IMR-90 (cell line): ENCODE measurements at regions of chr12 and their contacts with region 1.

Region 1: GRCh38 chr12:101127521-101128219 is 82.4 kb downstream of the SLC5A8 start:
- DNase-seq: peak; percentile 80
- ATAC-seq: peak; percentile 92
- H3K4me3 ChIP-seq: no peak overlapping the region
- H3K27ac ChIP-seq: peak overlapping the region; percentile 84
- H3K4me1 ChIP-seq: peaks cover 13% of the 10 kb centered on the region
- H3K27me3 ChIP-seq: no peaks in the 10 kb centered on the region
- CTCF ChIP-seq: no peak
- POLR2A ChIP-seq: no peak
- RAD21 ChIP-seq: no peak

Region 2: DNA sequence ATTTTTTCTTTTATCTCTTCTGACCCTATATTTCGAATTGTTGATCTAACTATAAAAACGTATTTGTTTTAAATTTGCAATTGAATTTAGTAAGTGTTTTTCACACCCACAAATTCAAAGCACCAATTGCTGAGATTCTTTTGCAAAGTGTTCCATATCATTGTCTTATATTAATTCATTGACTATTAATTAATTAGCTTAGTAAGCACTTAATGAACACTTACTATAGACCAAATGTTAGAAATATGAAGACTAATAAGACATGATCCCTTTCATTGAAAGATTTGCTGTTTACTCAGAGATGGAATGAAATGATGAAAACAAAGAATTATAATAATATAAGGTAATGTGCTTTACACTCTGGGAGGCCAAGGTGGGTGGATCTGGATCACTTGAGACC is 318.9 kb before region 1 on chr12:
- CTCF ChIA-PET with region 1: no interaction called
- POLR2A ChIA-PET with region 1: no interaction called
- dilution Hi-C with region 1: no loop called
- in situ Hi-C with region 1: no loop called
- intact Hi-C with region 1: no loop called
- DNase-seq: no peak
- ATAC-seq: no peak
- H3K4me3 ChIP-seq: no peak overlapping the region
- H3K27ac ChIP-seq: no peak overlapping the region
- H3K4me1 ChIP-seq: no peaks in the 10 kb centered on the region; the same call in 1 of the 2 replicates
- H3K27me3 ChIP-seq: no peaks in the 10 kb centered on the region
- CTCF ChIP-seq: no peak
- POLR2A ChIP-seq: no peak
- RAD21 ChIP-seq: no peak

Region 3: DNA sequence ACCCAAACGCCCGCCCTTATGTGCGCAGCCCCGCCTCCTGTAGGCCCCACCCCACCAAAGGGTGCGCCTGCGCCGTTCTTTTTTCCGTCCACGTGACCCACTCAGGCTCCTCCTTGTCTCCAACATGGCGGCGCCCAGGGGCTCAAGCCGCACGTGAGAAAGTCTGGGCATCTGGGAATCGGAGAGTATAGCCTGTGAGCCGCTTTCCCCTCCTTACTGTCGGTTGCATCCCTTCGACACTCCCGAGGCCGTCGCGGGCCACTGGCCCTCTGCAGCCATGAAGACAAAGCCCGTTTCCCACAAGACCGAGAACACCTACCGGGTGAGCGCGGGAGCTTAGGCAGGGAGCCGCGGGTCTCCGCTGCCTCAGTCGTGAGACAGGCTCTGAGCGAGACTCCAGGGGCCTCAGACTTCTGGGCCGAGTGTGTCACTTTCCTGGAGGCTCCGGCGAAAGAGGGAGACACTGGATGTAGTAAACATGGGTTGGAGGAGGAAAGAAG is 152.4 kb after region 1 on chr12 and contains the start of gene UTP20:
- CTCF ChIA-PET with region 1: no interaction called
- POLR2A ChIA-PET with region 1: no interaction called
- dilution Hi-C with region 1: no loop called
- in situ Hi-C with region 1: no loop called
- intact Hi-C with region 1: loop called (anchors 5 kb)
- DNase-seq: peak; percentile 82
- ATAC-seq: peak; percentile 100
- H3K4me3 ChIP-seq: peak within 1 kb of the TSS; percentile 78
- H3K27ac ChIP-seq: peak within 1 kb of the TSS; percentile 50; the same call in 1 of the 2 replicates
- H3K4me1 ChIP-seq: no peaks in the 10 kb centered on the region
- H3K27me3 ChIP-seq: peaks cover 4% of the 10 kb centered on the region
- CTCF ChIP-seq: no peak
- POLR2A ChIP-seq: peak; percentile 65
- RAD21 ChIP-seq: no peak
- total RNA-seq, gene UTP20: 22.0 and 29.7 TPM in 2 replicates